GM18951 (cell line): ENCODE measurements at regions of chrX and their contacts with region 1.

Region 1: DNA sequence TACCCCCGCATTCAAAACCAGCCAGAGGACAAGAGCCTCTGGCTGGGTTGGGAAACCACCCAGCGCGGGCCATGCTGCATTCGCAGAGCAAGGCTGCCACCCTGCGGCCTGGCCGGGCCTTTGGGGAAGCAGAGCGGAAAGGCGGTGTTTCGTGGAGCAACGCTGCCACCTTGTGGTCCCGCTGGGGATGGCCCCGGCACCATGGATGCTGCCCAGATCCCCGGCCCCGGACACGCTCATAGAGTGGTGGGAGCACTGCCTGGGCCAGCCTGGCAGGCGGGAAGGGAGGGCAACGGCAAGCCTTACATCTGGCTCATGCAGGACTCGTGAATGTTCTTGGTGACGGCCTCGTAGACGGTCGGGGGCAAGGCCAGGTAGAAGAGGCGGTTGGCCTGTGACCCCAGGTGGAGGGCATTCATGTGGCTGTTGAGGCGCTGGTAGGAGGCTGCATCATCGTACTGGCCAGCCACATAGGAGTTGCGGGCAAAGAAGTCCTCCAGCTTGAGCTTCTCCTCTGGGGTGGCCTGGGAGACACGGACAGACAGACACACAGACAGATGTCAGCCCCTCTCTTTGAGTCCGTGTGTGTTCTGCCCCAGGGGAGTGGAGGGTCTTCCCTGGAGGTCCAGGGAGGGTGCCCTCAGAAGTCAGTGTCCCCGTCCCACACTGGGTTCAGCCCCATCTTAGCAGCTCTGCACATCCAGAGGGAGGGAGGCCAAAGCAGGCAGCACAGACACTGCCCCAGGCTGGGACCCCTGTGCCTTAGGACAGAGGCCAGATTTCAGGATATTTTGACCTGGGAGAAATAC is 11.6 kb downstream of the G6PD start:
- POLR2A ChIP-seq: no peak

Region 2: GRCh38 chrX:152958524-152959465 is 1576.3 kb before region 1 on chrX:
- in situ Hi-C with region 1: loop called (anchors 25 kb)
- POLR2A ChIP-seq: peak; percentile 50

Region 3: GRCh38 chrX:153200462-153200861 is 1334.6 kb before region 1 on chrX:
- in situ Hi-C with region 1: no loop called
- POLR2A ChIP-seq: no peak

Region 4: DNA sequence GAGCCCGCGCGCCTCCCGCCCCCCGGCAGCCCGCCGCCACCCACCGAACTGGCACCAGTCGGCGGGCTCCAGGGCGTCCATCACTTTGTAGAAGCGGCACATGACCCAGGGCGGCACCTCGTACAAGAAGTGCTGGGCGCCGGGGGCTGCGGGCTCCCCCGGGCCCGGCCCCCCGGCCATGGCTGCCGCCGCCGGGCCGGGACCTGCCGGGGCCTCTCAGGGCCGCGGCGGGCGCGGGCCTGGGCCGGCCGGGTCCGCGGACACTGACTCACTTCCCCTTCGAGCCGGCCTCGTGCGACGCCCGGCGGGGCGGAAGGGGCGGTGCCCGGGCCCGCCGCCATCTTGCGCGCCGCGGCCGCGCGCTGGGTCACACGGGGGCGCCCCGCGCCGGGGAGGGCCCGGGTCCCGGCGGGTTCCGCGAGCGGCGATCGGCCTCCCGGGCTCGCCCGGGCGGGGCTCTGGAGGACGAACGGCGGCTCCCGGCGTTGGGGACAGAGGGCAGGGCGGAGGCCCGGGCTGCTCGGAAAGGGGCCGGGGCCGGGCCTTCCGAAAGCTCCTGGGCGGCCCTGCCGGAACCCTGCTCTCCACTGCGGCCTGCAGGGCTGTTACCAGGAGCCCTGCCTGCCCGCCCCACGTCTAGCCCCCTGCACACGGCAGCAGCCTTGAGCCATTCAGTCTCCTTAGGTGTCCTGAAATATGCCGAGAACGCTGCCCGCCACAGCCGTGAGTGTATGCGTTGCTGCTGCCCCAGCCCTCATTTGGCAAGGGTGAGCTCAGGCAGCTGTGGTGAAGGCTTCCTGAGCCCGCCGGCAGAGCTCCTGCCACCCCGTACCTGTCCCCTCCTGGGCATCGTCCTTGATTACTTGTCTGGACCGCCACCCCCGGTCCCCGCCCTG is 515.2 kb before region 1 on chrX and contains the start of gene IRAK1:
- in situ Hi-C with region 1: loop called (anchors 25 kb)
- POLR2A ChIP-seq: peak; percentile 73

Region 5: GRCh38 chrX:154368630-154369448 is 166.2 kb before region 1 on chrX:
- in situ Hi-C with region 1: no loop called
- POLR2A ChIP-seq: peak; percentile 32

Region 6: DNA sequence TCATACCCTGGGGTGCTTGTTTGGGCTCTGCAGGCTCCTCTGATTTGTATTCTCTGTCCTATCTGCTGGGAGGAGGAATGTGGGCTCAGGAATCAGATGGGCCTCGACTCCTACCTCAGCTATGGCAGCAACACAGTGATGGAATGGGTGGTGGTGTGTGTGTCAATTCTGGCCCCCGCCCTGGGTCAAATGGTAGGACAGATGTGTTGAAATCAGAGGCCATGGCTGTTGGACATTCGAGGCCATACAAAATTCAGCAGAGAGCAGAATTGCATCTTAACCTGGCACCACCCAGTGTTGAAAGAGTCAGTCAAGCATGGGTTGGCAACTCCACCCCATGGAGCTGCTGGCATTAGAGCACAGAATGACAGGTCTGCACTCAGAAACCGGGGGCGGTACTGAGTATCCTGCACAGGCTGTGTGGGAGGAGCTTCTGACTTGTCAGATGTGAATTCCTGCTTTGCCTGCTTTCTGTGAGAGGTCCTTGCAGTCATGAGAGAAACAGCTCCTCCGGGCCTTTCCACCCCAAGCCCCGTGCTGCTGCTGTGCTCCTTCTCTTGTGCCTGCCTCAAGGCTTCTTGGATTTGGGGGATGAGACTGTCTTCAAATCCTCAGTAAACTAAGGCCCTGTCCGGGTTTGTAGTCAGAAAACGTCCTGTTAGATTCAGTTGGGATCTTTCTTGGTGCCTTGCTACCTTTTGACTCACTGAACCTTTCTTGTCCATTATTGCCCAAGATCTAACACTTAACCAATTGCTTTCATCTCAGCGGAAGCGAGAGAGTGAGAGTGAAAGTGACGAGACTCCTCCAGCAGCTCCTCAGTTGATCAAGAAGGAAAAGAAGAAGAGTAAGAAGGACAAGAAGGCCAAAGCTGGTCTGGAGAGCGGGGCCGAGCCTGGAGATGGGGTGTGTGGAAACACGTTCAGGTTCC is 240.6 kb after region 1 on chrX:
- in situ Hi-C with region 1: no loop called
- POLR2A ChIP-seq: no peak